Vagina (tissue), 2 donors: ENCODE measurements at regions of chr3 and their contacts with region 1.

Region 1: GRCh38 chr3:141192345-141192744 is 39.3 kb upstream of the PXYLP1 start:
- DNase-seq: peak in 1 of 2 donors; percentile 94
- H3K4me3 ChIP-seq: no peak overlapping the region
- H3K27ac ChIP-seq: no peak overlapping the region
- H3K4me1 ChIP-seq: no peaks in the 10 kb centered on the region
- H3K27me3 ChIP-seq: no peaks in the 10 kb centered on the region
- CTCF ChIP-seq: peak; percentile 94 to 100 (median 99)
- POLR2A ChIP-seq: no peak

Region 2: DNA sequence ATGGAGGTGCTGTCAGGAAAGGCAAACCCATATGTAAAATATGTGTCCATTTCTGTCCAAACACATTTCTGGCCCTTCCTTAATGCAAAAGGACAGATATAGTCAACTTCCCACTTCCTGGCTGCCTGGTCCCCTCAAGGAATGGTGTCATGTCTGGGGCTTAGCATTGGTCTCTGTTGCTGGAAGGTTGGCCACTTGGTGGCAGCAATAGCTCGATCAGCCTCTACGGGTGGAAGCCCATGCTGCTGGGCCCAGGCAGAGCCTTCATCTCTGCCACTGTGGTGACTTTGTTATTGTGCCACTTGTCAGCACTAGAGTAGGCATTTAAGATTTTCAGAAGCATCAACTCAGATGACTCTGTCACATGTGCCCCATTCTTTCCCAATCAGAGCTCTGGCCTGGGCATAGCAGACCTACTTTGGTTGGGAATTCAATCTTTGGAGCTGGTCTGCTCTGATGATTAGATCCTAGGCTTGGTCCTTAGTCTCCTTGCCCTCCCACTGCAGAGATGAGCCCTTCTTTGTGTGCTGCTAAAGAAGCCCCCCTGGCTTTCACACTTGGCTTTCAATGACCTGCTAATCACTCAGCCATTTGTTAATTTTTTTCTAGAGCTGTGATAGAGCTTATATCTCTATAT is 192.2 kb before region 1 on chr3:
- intact Hi-C with region 1: loop called (anchors 2 kb)
- DNase-seq: no peak
- H3K4me3 ChIP-seq: no peak overlapping the region
- H3K27ac ChIP-seq: no peak overlapping the region
- H3K4me1 ChIP-seq: no peaks in the 10 kb centered on the region
- H3K27me3 ChIP-seq: no peaks in the 10 kb centered on the region
- CTCF ChIP-seq: peak in 2 of 3 experiments; percentile 44 to 54
- POLR2A ChIP-seq: no peak

Region 3: GRCh38 chr3:141011232-141011996 is 180.9 kb before region 1 on chr3:
- intact Hi-C with region 1: loop called (anchors 5 kb)
- DNase-seq: no peak
- H3K4me3 ChIP-seq: no peak overlapping the region
- H3K27ac ChIP-seq: no peak overlapping the region
- H3K4me1 ChIP-seq: no peaks in the 10 kb centered on the region
- H3K27me3 ChIP-seq: no peaks in the 10 kb centered on the region
- CTCF ChIP-seq: peak; percentile 22 to 55 (median 26)
- POLR2A ChIP-seq: no peak